MCF 10A (cell line): ENCODE measurements at regions of chr10 and their contacts with region 1.

Region 1: GRCh38 chr10:92573798-92574547 is at the start of gene IDE:
- DNase-seq: peak; percentile 81
- H3K4me3 Mint-ChIP-seq: peak within 1 kb of the TSS; percentile 76
- H3K27ac Mint-ChIP-seq: peak within 1 kb of the TSS; percentile 65
- H3K4me1 Mint-ChIP-seq: peaks cover 25% of the 10 kb centered on the region
- H3K27me3 Mint-ChIP-seq: no peaks in the 10 kb centered on the region
- CTCF ChIP-seq: peak; percentile 84
- total RNA-seq, gene IDE: 54.6 and 66.4 TPM in 2 replicates

Region 2: GRCh38 chr10:92395271-92395670 is 178.7 kb before region 1 on chr10:
- CTCF ChIA-PET with region 1: no interaction called
- POLR2A ChIA-PET with region 1: no interaction called
- intact Hi-C with region 1: no loop called
- DNase-seq: no peak
- H3K4me3 Mint-ChIP-seq: no peak overlapping the region
- H3K27ac Mint-ChIP-seq: no peak overlapping the region
- H3K4me1 Mint-ChIP-seq: no peaks in the 10 kb centered on the region
- H3K27me3 Mint-ChIP-seq: peaks cover 3% of the 10 kb centered on the region
- CTCF ChIP-seq: no peak

Region 3: GRCh38 chr10:92517034-92517655 is 56.8 kb before region 1 on chr10:
- CTCF ChIA-PET with region 1: interaction called, 93 read pairs
- POLR2A ChIA-PET with region 1: interaction called, 78 read pairs
- intact Hi-C with region 1: loop called (anchors 1 kb)
- DNase-seq: peak; percentile 79
- H3K4me3 Mint-ChIP-seq: no peak overlapping the region
- H3K27ac Mint-ChIP-seq: no peak overlapping the region
- H3K4me1 Mint-ChIP-seq: no peaks in the 10 kb centered on the region
- H3K27me3 Mint-ChIP-seq: no peaks in the 10 kb centered on the region
- CTCF ChIP-seq: peak; percentile 70

Region 4: GRCh38 chr10:92530421-92530820 is 43.6 kb before region 1 on chr10:
- CTCF ChIA-PET with region 1: interaction called, 14 read pairs
- POLR2A ChIA-PET with region 1: interaction called, 5 read pairs
- intact Hi-C with region 1: no loop called
- DNase-seq: no peak
- H3K4me3 Mint-ChIP-seq: no peak overlapping the region
- H3K27ac Mint-ChIP-seq: no peak overlapping the region
- H3K4me1 Mint-ChIP-seq: no peaks in the 10 kb centered on the region
- H3K27me3 Mint-ChIP-seq: no peaks in the 10 kb centered on the region
- CTCF ChIP-seq: no peak

Region 5: GRCh38 chr10:92544296-92544695 is 29.7 kb before region 1 on chr10:
- CTCF ChIA-PET with region 1: interaction called, 5 read pairs
- POLR2A ChIA-PET with region 1: interaction called, 31 read pairs
- intact Hi-C with region 1: no loop called
- DNase-seq: peak; percentile 5
- H3K4me3 Mint-ChIP-seq: no peak overlapping the region
- H3K27ac Mint-ChIP-seq: peak overlapping the region; percentile 58
- H3K4me1 Mint-ChIP-seq: peaks cover 14% of the 10 kb centered on the region
- H3K27me3 Mint-ChIP-seq: no peaks in the 10 kb centered on the region
- CTCF ChIP-seq: no peak

Region 6: DNA sequence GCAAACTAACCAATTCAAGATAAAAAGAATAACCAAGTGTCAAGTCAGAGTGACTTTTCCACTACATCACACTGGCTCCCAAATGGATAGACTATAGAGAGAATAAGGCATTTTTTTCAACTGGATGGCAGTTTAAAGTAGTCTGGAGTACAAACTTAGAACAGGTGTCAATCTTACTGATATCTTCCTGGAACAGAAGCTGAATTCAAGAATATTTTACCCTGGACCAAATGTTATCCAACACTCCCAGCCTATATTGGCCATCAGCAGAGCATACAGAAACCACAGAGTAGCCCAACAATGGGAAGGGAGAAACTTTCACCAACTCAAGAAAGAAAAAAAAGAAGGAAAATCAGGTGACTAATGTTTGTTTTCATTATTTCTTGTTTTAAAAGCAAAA is 11.5 kb before region 1 on chr10:
- CTCF ChIA-PET with region 1: interaction called, 8 read pairs
- POLR2A ChIA-PET with region 1: interaction called, 12 read pairs
- intact Hi-C with region 1: no loop called
- DNase-seq: no peak
- H3K4me3 Mint-ChIP-seq: no peak overlapping the region
- H3K27ac Mint-ChIP-seq: no peak overlapping the region
- H3K4me1 Mint-ChIP-seq: peaks cover 18% of the 10 kb centered on the region
- H3K27me3 Mint-ChIP-seq: no peaks in the 10 kb centered on the region
- CTCF ChIP-seq: no peak

Region 7: DNA sequence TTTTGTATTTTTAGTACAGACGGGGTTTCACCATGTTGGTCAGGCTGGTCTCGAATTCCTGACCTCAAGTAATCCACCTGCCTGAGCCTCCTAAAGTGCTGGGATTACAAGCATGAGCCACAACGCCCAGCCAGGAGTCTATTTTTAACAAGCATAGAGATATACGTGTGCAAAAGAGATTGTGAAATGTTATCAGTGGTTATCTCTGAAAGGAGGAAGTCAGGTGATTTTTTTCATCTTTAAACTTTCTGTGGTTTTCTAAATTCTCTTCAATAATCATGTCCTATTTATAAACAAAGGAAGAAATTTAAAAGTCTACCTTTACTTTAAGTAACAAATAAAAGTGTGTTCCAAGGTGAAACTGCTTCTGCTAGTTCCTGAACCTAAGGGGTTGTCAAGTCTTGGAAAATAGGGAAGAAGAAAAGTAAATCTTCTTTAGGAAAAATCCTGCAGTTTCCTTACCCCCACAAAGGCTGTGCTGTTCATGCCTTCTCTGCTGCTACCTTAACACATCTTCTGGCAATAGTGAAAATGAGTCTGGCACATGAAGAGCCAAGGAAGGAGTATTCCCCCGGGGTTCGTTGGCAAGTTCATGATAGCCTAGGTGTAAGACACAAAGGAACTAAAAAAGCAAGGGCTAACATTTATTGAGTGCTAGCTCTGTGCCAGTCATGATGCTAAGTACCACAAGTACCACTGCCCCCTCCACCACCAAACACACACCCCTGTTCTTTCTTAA is 550.8 kb after region 1 on chr10:
- CTCF ChIA-PET with region 1: no interaction called
- POLR2A ChIA-PET with region 1: no interaction called
- intact Hi-C with region 1: no loop called
- DNase-seq: no peak
- H3K4me3 Mint-ChIP-seq: no peak overlapping the region
- H3K27ac Mint-ChIP-seq: no peak overlapping the region
- H3K4me1 Mint-ChIP-seq: no peaks in the 10 kb centered on the region
- H3K27me3 Mint-ChIP-seq: no peaks in the 10 kb centered on the region
- CTCF ChIP-seq: no peak

Region 8: DNA sequence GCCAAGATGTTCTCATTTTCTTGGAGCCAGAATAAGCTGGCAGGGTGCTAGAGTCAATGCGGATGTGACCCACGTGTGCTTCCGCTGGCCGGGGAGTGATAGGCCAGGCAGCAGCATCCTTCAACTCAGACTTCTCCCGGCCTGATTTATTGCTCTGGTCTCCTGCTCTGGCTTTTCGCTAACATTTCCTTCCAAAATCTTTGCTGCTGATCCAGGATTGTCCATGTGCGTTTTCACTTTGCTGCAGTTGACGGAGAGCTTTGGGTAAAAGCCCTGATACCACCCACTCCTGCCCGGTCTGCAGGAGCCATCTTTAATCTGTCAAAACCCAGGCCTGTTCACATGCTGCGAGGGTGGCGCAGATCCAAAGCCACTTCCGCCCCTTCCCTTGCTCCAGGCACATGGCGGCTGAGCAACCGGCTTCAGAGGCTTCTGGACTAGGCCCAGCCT is 606.5 kb after region 1 on chr10:
- CTCF ChIA-PET with region 1: no interaction called
- POLR2A ChIA-PET with region 1: no interaction called
- intact Hi-C with region 1: no loop called
- DNase-seq: no peak
- H3K4me3 Mint-ChIP-seq: no peak overlapping the region
- H3K27ac Mint-ChIP-seq: no peak overlapping the region
- H3K4me1 Mint-ChIP-seq: no peaks in the 10 kb centered on the region
- H3K27me3 Mint-ChIP-seq: no peaks in the 10 kb centered on the region
- CTCF ChIP-seq: no peak